ENCODE measurements at regions of chr6 and their contacts with region 1.

Region 1: DNA sequence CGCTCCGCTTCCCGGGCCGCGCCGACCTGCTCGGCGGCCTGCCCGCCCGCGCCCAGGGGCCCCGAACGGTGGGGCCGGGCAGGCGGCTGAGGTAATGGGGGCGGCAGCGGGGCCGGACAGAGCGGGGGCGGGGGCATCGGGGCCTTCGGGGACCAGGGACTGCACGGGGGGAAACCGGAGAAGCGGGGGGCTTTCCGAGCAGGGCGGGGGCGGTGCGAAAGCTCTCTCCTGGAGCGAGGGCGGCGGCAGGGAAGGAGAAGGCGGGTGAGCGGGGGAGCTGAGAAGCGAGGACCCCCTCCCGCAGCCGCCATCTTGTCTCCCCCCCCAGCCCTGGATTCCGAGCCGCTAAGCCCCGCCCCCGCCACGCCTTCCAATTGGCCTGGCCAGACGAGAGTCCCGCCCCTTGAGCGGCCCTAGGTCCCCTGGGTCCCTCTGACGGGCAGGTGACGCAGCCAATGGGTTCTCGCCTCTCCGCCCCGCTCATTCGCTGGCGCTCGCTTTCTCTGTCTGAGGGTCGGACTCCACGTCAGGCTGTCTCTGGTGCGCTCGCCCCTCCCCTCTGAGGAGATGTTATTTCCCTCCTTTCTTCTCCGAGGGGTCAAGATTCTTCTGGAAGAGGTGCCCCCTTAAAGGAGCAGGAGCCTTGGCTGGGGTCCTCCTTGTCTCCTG is 470 bp downstream of the BRPF3 start:
- DNase-seq: peak; percentile 99
- ATAC-seq: peak; percentile 98

Region 2: GRCh38 chr6:36027501-36028087 is 169.4 kb before region 1 on chr6 and contains the start of gene MAPK14:
- intact Hi-C with region 1: loop called (anchors 5 to 10 kb)
- DNase-seq: peak; percentile 99
- ATAC-seq: peak; percentile 92 to 95
- total RNA-seq, gene MAPK14: 36.1 to 38.4 TPM

Region 3: GRCh38 chr6:36123257-36124139 is 73.5 kb before region 1 on chr6:
- intact Hi-C with region 1: loop called in 1 of 2 experiments (anchors 5 kb)
- DNase-seq: peak; percentile 77
- ATAC-seq: peak; percentile 76 to 84

Region 4: DNA sequence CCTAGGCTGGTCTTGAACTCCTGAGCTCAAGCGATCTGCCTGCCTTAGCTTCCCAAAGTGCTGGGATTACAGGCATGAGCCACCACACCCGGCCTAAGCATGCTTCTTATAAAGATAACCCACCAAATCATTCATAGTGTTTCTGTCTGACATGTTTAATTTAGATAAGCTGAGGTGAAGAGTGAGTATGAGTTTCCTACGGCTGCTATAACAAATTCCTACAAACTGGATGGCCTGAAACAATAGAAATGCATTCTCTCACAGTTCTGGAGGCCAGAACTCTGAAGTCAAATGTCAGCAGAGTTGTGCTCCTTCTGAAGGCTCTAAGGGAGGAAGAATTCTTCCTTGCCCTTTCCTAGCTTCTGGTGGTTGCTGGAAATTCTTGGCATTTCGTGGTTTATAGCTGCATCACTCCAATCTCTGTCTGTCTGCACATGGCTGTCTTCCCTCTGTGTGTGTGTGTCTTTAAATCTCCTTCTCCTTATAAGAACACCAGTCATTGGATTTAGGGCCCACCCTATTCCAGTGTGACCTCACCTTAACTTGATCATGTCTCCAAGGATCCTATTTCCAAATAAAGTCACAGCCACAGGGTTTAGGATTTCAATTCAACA is 36.8 kb before region 1 on chr6:
- intact Hi-C with region 1: no loop called
- DNase-seq: no peak
- ATAC-seq: no peak

Region 5: GRCh38 chr6:36302227-36302976 is 105.4 kb after region 1 on chr6:
- intact Hi-C with region 1: no loop called
- DNase-seq: peak; percentile 89
- ATAC-seq: peak; percentile 90

Region 6: GRCh38 chr6:36442671-36443470 is 245.9 kb after region 1 on chr6 and contains the starts of genes KCTD20 and PXT1:
- intact Hi-C with region 1: no loop called
- DNase-seq: peak; percentile 92
- ATAC-seq: peak; percentile 91 to 95
- total RNA-seq, gene KCTD20: 26.7 to 33.7 TPM
- total RNA-seq, gene PXT1: 0.26 TPM in 1 of 2 donors, not detected in the other

Measured in left cardiac atrium (tissue), 4 donors.